BJ (cell line): ENCODE measurements at regions of chr17 and their contacts with region 1.

Region 1: DNA sequence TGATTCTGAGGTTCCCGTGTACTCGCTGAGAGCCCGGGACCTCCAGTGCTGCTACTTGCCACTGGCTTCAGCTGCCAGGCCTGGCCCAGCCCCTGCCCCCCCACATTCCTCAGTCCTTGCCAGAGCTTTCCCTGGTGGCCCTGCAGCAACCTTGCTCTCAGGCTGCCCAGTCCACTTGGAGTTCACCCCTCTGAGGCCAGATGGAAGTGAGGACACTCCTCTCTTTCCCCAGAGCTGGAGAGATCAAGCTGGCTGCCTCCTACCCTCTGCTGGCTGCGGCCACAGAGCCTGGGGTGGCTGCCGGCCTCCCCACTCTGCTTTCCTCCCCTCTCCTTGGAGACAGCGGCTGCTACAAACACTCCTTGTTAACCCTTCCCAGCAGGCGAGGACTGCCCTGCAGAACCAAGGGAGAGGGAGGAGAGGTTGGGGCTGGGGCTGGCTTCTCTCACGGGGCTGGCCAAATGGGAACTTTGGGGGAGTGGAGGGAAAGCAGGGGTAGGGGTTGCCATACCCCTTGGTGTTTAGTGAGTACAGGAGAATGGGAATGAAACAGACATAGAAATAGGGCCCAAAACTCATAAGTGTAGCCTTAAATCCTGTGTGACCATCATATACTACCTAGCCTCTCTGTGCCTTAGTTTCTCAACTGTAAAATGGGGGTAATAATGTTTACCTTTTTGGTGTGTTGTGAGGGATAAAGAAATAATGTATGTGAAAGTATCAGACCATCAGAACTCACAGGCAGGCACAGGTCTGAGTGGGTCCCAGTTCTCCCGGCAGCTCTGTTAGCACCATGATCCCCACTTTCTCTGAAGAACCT is at the start of gene GAS2L2:
- DNase-seq: no peak
- H3K4me3 ChIP-seq: no peak within 1 kb of the TSS
- H3K27me3 ChIP-seq: peaks cover 18% of the 10 kb centered on the region
- CTCF ChIP-seq: no peak
- polyA plus RNA-seq, gene GAS2L2: not detected in 2 replicates

Region 2: GRCh38 chr17:35612924-35613521 is 140.1 kb before region 1 on chr17:
- CTCF ChIA-PET with region 1: interaction called, 268 read pairs
- POLR2A ChIA-PET with region 1: no interaction called
- DNase-seq: no peak
- H3K4me3 ChIP-seq: no peak overlapping the region
- H3K27me3 ChIP-seq: no peaks in the 10 kb centered on the region
- CTCF ChIP-seq: peak; percentile 74